Activated CD4-positive, alpha-beta T cell treated with anti-CD3 and anti-CD28 coated beads for 36 hours (primary cell): ENCODE measurements at regions of chr1 and their contacts with region 1.

Region 1: GRCh38 chr1:87805666-87806378 is 477.1 kb downstream of the LMO4 start:
- DNase-seq: no peak
- ATAC-seq: no peak
- H3K4me3 Mint-ChIP-seq: no peak overlapping the region
- H3K27ac Mint-ChIP-seq: no peak overlapping the region
- H3K4me1 Mint-ChIP-seq: no peaks in the 10 kb centered on the region
- H3K27me3 Mint-ChIP-seq: no peaks in the 10 kb centered on the region

Region 2: DNA sequence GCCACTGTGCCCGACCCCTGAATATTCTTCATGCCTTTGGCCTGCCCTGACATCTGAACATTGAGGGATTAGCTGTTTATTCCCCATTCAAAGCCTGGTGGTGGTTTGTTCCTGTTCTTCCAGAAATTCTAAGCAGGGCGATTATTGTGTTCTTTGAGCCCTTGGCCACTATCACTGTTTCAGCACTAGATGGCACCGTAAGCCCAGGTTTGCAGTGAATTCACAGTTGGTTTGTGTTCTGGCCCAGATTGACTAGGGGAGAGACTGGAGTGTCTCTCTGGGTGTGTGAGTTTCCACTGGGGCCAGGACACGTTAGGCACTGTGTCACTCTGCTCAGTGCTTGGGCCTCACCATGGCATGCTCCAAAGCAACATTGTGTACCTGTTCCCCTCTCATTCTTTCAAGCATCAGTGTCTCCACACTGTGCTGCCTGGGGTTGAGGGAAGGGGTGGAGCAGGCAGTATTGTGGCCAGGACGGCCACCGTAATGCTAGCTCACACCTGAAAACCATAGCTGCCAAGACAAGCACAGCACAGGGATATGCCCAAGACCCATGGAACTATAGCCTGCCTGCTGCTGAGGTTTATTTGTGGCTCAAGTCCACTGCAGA is 930.9 kb after region 1 on chr1:
- CTCF ChIA-PET with region 1: no interaction called
- POLR2A ChIA-PET with region 1: interaction called, 12 read pairs
- intact Hi-C with region 1: no loop called
- DNase-seq: peak; percentile 56
- ATAC-seq: peak; percentile 73
- H3K4me3 Mint-ChIP-seq: no peak overlapping the region
- H3K27ac Mint-ChIP-seq: no peak overlapping the region
- H3K4me1 Mint-ChIP-seq: peaks cover 12% of the 10 kb centered on the region
- H3K27me3 Mint-ChIP-seq: no peaks in the 10 kb centered on the region